Naive thymus-derived CD4-positive, alpha-beta T cell (primary cell): ENCODE measurements at regions of chr16 and their contacts with region 1.

Region 1: GRCh38 chr16:10988164-10988803 is 43.9 kb downstream of the CLEC16A start:
- DNase-seq: peak in 1 of 9 donors; percentile 71
- ATAC-seq: peak; percentile 51
- H3K4me3 ChIP-seq: no peak overlapping the region
- H3K4me3 Mint-ChIP-seq: peak overlapping the region; percentile 45 to 90 (median 68)
- H3K27ac ChIP-seq: no peak overlapping the region
- H3K27ac Mint-ChIP-seq: peak overlapping the region in 8 of 9 donors; percentile 2 to 80 (median 59)
- H3K4me1 ChIP-seq: peaks cover 20 to 22% of the 10 kb centered on the region in 2 donors
- H3K4me1 Mint-ChIP-seq: peaks cover 37 to 84% (median 40%) of the 10 kb centered on the region in 7 donors
- H3K27me3 ChIP-seq: no peaks in the 10 kb centered on the region
- H3K27me3 Mint-ChIP-seq: no peaks in the 10 kb centered on the region

Region 2: DNA sequence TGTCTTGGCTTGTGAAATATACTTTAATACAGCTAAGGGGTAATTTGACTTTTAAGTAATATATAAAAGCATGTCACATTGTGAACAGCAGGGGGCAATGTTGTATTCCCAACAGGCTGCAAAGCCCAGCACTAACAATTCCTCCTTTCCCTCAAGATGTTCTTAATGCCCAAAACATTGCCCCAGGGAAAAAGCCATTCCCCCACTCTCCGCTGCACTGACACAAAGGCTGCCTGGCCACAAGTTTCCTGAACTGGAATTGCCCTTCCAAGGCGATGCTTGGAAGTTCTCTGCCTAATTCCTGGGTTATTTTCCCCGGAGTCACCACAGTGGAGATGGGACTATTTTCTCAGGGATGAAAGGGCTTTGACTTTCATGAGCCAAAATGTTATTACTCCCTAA is 16.7 kb before region 1 on chr16:
- CTCF ChIA-PET with region 1: interaction called, 3 read pairs
- POLR2A ChIA-PET with region 1: interaction called, 3 read pairs
- intact Hi-C with region 1: loop called (anchors 2 kb)
- DNase-seq: peak in 6 of 9 donors; percentile 15 to 56 (median 46)
- ATAC-seq: peak; percentile 62
- H3K4me3 ChIP-seq: no peak overlapping the region
- H3K4me3 Mint-ChIP-seq: peak overlapping the region in 1 of 10 donors; percentile 60
- H3K27ac ChIP-seq: no peak overlapping the region
- H3K27ac Mint-ChIP-seq: peak overlapping the region in 3 of 9 donors; percentile 18 to 49 (median 42)
- H3K4me1 ChIP-seq: no peaks in the 10 kb centered on the region
- H3K4me1 Mint-ChIP-seq: peaks cover 6 to 70% (median 15%) of the 10 kb centered on the region in 7 donors
- H3K27me3 ChIP-seq: no peaks in the 10 kb centered on the region
- H3K27me3 Mint-ChIP-seq: no peaks in the 10 kb centered on the region

Region 3: GRCh38 chr16:11004957-11005610 is 16.8 kb after region 1 on chr16:
- CTCF ChIA-PET with region 1: no interaction called
- POLR2A ChIA-PET with region 1: no interaction called
- intact Hi-C with region 1: no loop called
- DNase-seq: no peak
- ATAC-seq: no peak
- H3K4me3 ChIP-seq: no peak overlapping the region
- H3K4me3 Mint-ChIP-seq: no peak overlapping the region
- H3K27ac ChIP-seq: no peak overlapping the region
- H3K27ac Mint-ChIP-seq: peak overlapping the region in 1 of 9 donors; percentile 18
- H3K4me1 ChIP-seq: no peaks in the 10 kb centered on the region
- H3K4me1 Mint-ChIP-seq: peaks cover 0 to 42% (median 4%) of the 10 kb centered on the region in 7 donors
- H3K27me3 ChIP-seq: no peaks in the 10 kb centered on the region
- H3K27me3 Mint-ChIP-seq: no peaks in the 10 kb centered on the region

Region 4: GRCh38 chr16:11032922-11033291 is 44.6 kb after region 1 on chr16:
- CTCF ChIA-PET with region 1: no interaction called
- POLR2A ChIA-PET with region 1: no interaction called
- intact Hi-C with region 1: loop called in 1 of 2 experiments (anchors 5 kb)
- DNase-seq: no peak
- ATAC-seq: no peak
- H3K4me3 ChIP-seq: no peak overlapping the region
- H3K4me3 Mint-ChIP-seq: no peak overlapping the region
- H3K27ac ChIP-seq: no peak overlapping the region
- H3K27ac Mint-ChIP-seq: peak overlapping the region in 3 of 9 donors; percentile 43 to 63 (median 47)
- H3K4me1 ChIP-seq: no peaks in the 10 kb centered on the region
- H3K4me1 Mint-ChIP-seq: peaks cover 0 to 29% (median 0%) of the 10 kb centered on the region in 7 donors
- H3K27me3 ChIP-seq: no peaks in the 10 kb centered on the region
- H3K27me3 Mint-ChIP-seq: no peaks in the 10 kb centered on the region

Region 5: GRCh38 chr16:11105038-11105903 is 117.0 kb after region 1 on chr16:
- CTCF ChIA-PET with region 1: interaction called, 4 read pairs
- POLR2A ChIA-PET with region 1: no interaction called
- intact Hi-C with region 1: loop called in 1 of 2 experiments (anchors 5 kb)
- DNase-seq: peak in 3 of 9 donors; percentile 10 to 35 (median 28)
- ATAC-seq: peak; percentile 80
- H3K4me3 ChIP-seq: no peak overlapping the region
- H3K4me3 Mint-ChIP-seq: peak overlapping the region in 8 of 10 donors; percentile 5 to 78 (median 32)
- H3K27ac ChIP-seq: no peak overlapping the region
- H3K27ac Mint-ChIP-seq: peak overlapping the region in 7 of 9 donors; percentile 1 to 88 (median 19)
- H3K4me1 ChIP-seq: peaks cover 16 to 18% of the 10 kb centered on the region in 2 donors
- H3K4me1 Mint-ChIP-seq: peaks cover 25 to 75% (median 27%) of the 10 kb centered on the region in 7 donors
- H3K27me3 ChIP-seq: no peaks in the 10 kb centered on the region
- H3K27me3 Mint-ChIP-seq: no peaks in the 10 kb centered on the region

Region 6: GRCh38 chr16:11224096-11224893 is 236.0 kb after region 1 on chr16:
- CTCF ChIA-PET with region 1: no interaction called
- POLR2A ChIA-PET with region 1: no interaction called
- intact Hi-C with region 1: loop called in 1 of 2 experiments (anchors 1 kb)
- DNase-seq: peak; percentile 36 to 67 (median 48)
- ATAC-seq: peak; percentile 68
- H3K4me3 ChIP-seq: peak overlapping the region; percentile 49
- H3K4me3 Mint-ChIP-seq: peak overlapping the region; percentile 78 to 87 (median 80)
- H3K27ac ChIP-seq: peak overlapping the region; percentile 91
- H3K27ac Mint-ChIP-seq: peak overlapping the region; percentile 97 to 99 (median 98)
- H3K4me1 ChIP-seq: peaks cover 30 to 36% of the 10 kb centered on the region in 2 donors
- H3K4me1 Mint-ChIP-seq: peaks cover 37 to 73% (median 52%) of the 10 kb centered on the region in 7 donors
- H3K27me3 ChIP-seq: no peaks in the 10 kb centered on the region
- H3K27me3 Mint-ChIP-seq: no peaks in the 10 kb centered on the region

Region 7: DNA sequence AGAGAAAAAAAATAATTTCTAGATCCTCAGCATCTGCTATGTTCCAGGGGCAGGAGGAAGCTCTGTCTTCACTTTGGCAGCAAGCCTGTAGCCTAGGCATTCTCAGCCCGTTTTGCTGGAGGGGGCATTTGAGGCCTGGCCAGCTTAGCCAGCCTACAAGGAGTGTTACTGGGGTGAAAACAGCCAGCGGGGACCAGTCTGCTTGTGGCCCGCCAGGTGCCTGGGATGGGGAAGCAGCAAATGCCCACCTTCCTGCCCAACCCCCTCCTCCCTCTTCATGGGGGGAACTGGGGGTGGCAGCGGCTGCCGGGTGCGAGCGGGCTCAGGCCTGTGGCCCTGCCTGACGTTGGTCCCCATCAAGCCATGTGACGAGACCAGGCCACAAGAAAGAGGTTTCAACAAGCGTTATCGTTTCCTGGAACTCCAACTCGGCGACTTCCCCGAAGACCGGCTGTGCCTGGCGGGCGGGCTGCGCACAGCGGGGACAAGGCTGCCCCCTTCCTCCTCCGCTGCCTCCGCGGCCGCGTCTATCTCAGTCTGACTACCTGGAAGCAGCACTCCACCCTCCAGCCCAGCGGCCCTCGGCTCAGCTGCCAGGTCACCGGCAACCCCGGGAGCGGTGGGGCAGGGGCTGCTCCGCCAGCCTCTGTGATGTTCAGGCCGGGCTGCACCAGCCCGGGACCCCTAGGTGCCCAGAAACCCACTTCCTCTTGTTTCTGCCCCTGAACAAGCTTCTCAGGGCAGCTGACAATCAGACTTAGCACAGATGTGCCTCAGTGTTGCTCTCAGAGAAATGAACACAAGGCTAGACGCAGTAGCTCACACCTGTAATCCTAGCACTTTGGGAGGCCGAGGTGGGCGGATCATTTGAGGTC is 244.8 kb after region 1 on chr16:
- CTCF ChIA-PET with region 1: no interaction called
- POLR2A ChIA-PET with region 1: no interaction called
- intact Hi-C with region 1: loop called in 1 of 2 experiments (anchors 1 kb)
- DNase-seq: peak; percentile 64 to 90 (median 85)
- ATAC-seq: peak; percentile 89
- H3K4me3 ChIP-seq: peak overlapping the region; percentile 50
- H3K4me3 Mint-ChIP-seq: peak overlapping the region; percentile 60 to 84 (median 76)
- H3K27ac ChIP-seq: peak overlapping the region; percentile 89
- H3K27ac Mint-ChIP-seq: peak overlapping the region; percentile 82 to 98 (median 97)
- H3K4me1 ChIP-seq: peaks cover 34 to 42% of the 10 kb centered on the region in 2 donors
- H3K4me1 Mint-ChIP-seq: peaks cover 45 to 86% (median 64%) of the 10 kb centered on the region in 7 donors
- H3K27me3 ChIP-seq: no peaks in the 10 kb centered on the region
- H3K27me3 Mint-ChIP-seq: no peaks in the 10 kb centered on the region